ENCODE measurements at regions of chr6 and their contacts with region 1.

Region 1: GRCh38 chr6:69780585-69781178 is 16.1 kb downstream of the LMBRD1 start:
- DNase-seq: peak; percentile 63
- H3K4me3 ChIP-seq: no peak overlapping the region
- H3K27ac ChIP-seq: no peak overlapping the region
- H3K4me1 ChIP-seq: peaks cover 5% of the 10 kb centered on the region
- H3K27me3 ChIP-seq: no peaks in the 10 kb centered on the region
- CTCF ChIP-seq: no peak

Region 2: DNA sequence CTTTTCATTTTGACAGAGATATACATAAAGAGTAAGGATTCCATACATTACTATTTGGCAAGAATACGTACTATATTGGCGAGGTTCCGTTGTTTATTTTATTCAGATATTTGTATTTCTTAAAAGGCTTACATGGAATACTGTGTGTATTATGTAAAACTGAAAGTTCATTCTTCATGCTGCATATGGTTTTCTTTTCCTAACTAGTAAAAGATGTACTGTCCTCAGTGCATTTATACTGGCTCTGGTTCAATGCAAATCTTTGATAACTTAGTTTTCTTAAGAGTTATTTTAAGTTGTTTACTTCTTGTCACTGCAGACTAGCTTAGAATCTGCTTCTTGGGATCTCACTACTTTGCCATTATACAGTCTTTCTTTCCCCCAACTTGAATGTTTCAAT is 1103.6 kb before region 1 on chr6:
- CTCF ChIA-PET with region 1: no interaction called
- dilution Hi-C with region 1: no loop called
- in situ Hi-C with region 1: no loop called
- intact Hi-C with region 1: no loop called
- DNase-seq: no peak
- H3K4me3 ChIP-seq: no peak overlapping the region
- H3K27ac ChIP-seq: no peak overlapping the region
- H3K4me1 ChIP-seq: no peaks in the 10 kb centered on the region
- H3K27me3 ChIP-seq: no peaks in the 10 kb centered on the region
- CTCF ChIP-seq: no peak

Region 3: GRCh38 chr6:69427882-69428281 is 352.8 kb before region 1 on chr6:
- CTCF ChIA-PET with region 1: no interaction called
- dilution Hi-C with region 1: no loop called
- in situ Hi-C with region 1: no loop called
- intact Hi-C with region 1: no loop called
- DNase-seq: no peak
- H3K4me3 ChIP-seq: no peak overlapping the region
- H3K27ac ChIP-seq: no peak overlapping the region
- H3K4me1 ChIP-seq: no peaks in the 10 kb centered on the region
- H3K27me3 ChIP-seq: no peaks in the 10 kb centered on the region
- CTCF ChIP-seq: no peak

Region 4: DNA sequence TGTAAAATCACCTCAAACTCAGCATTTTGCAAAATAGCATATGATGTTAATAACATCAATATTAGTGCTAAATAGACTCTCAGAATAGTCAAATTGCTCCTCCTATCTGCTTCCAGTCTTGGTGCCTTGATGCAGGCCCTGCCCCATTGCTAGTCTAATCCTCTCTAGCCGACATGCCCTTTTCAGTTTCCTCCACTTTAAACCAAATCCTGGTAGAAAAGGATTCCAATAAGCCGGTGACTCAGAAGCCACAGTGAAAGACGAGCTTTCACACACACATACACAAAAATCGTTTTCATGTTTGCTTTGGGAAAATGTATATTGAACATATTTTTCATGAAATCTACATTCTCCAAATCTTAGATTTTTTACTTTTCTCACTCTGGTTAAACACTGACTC is 187.0 kb before region 1 on chr6:
- CTCF ChIA-PET with region 1: no interaction called
- dilution Hi-C with region 1: no loop called
- in situ Hi-C with region 1: no loop called
- intact Hi-C with region 1: no loop called
- DNase-seq: no peak
- H3K4me3 ChIP-seq: no peak overlapping the region
- H3K27ac ChIP-seq: no peak overlapping the region
- H3K4me1 ChIP-seq: no peaks in the 10 kb centered on the region
- H3K27me3 ChIP-seq: no peaks in the 10 kb centered on the region
- CTCF ChIP-seq: no peak

Region 5: DNA sequence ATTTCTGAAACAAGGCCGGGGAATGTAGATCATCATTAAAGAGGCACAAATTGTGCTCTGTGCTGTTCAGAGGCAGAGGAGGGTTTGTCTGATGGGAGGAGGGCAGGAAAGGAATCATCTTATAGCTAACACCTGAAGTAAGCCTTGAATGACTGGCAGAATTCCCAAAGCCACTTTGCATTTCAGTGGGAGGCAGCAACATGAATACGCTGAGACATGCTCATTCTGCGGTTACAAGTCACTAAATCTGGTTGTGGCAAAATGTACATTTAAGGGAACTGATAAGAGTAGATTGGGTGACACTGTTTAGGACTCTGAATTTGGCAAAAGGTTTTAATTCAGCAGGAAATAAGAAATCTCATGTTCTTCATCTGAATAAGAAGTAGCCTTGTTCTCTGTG is 81.3 kb after region 1 on chr6:
- CTCF ChIA-PET with region 1: interaction called, 17 read pairs
- dilution Hi-C with region 1: no loop called
- in situ Hi-C with region 1: no loop called
- intact Hi-C with region 1: no loop called
- DNase-seq: peak; percentile 81
- H3K4me3 ChIP-seq: no peak overlapping the region
- H3K27ac ChIP-seq: no peak overlapping the region
- H3K4me1 ChIP-seq: peaks cover 17% of the 10 kb centered on the region
- H3K27me3 ChIP-seq: peaks cover 7% of the 10 kb centered on the region
- CTCF ChIP-seq: no peak

Region 6: GRCh38 chr6:70312165-70312745 is 531.6 kb after region 1 on chr6:
- CTCF ChIA-PET with region 1: no interaction called
- dilution Hi-C with region 1: no loop called
- in situ Hi-C with region 1: no loop called
- intact Hi-C with region 1: no loop called
- DNase-seq: peak; percentile 98
- H3K4me3 ChIP-seq: no peak overlapping the region
- H3K27ac ChIP-seq: no peak overlapping the region
- H3K4me1 ChIP-seq: no peaks in the 10 kb centered on the region
- H3K27me3 ChIP-seq: peaks cover 61% of the 10 kb centered on the region
- CTCF ChIP-seq: no peak

Measured in mammary epithelial cell (primary cell).